MCF 10A (cell line): ENCODE measurements at regions of chr12 and their contacts with region 1.

Region 1: DNA sequence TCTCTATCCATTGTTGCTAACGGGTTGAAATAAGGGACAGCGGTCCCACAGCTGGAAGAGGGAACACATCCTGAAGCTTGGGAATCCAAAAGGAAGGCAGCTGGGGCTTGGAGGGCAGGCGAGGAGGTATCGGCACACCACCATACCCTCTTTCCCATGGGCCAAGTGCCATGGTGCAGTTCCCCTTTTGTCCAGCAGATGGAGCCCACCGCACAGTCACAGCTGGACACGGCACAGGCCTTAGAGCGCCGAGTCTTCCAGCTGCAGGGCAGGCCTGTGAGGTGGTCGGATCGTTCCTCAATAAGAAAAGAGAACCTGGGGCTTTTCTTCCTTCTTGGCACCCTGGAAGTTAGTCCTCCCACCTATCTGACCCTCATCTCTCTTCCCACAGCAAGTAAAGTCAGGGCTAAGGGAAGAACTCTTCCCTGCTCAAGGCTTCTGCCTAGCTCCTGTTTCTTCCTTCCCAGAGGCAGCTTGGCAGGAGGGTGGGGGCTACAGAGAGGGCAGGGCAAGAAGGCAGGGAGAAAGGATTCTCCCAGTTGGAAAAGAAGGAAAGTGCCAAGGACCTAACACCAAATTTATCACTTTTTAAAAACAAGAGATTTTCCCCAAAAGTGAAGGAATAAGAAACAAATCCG is 8.6 kb downstream of the PPP1R1A start:
- DNase-seq: peak; percentile 83
- H3K4me3 Mint-ChIP-seq: no peak overlapping the region
- H3K27ac Mint-ChIP-seq: no peak overlapping the region
- H3K4me1 Mint-ChIP-seq: no peaks in the 10 kb centered on the region
- H3K27me3 Mint-ChIP-seq: peaks cover 62% of the 10 kb centered on the region
- CTCF ChIP-seq: peak; percentile 99

Region 2: GRCh38 chr12:54560374-54560858 is 19.4 kb before region 1 on chr12:
- CTCF ChIA-PET with region 1: interaction called, 107 read pairs
- POLR2A ChIA-PET with region 1: no interaction called
- intact Hi-C with region 1: no loop called
- DNase-seq: peak; percentile 73
- H3K4me3 Mint-ChIP-seq: peak overlapping the region; percentile 43
- H3K27ac Mint-ChIP-seq: no peak overlapping the region
- H3K4me1 Mint-ChIP-seq: peaks cover 6% of the 10 kb centered on the region
- H3K27me3 Mint-ChIP-seq: peaks cover 41% of the 10 kb centered on the region
- CTCF ChIP-seq: no peak

Region 3: GRCh38 chr12:55983229-55983842 is 1403.5 kb after region 1 on chr12:
- CTCF ChIA-PET with region 1: no interaction called
- POLR2A ChIA-PET with region 1: no interaction called
- intact Hi-C with region 1: no loop called
- DNase-seq: no peak
- H3K4me3 Mint-ChIP-seq: no peak overlapping the region
- H3K27ac Mint-ChIP-seq: no peak overlapping the region
- H3K4me1 Mint-ChIP-seq: peaks cover 2% of the 10 kb centered on the region
- H3K27me3 Mint-ChIP-seq: no peaks in the 10 kb centered on the region
- CTCF ChIP-seq: no peak